Panc1 (cell line): ENCODE measurements at regions of chr11 and their contacts with region 1.

Region 1: DNA sequence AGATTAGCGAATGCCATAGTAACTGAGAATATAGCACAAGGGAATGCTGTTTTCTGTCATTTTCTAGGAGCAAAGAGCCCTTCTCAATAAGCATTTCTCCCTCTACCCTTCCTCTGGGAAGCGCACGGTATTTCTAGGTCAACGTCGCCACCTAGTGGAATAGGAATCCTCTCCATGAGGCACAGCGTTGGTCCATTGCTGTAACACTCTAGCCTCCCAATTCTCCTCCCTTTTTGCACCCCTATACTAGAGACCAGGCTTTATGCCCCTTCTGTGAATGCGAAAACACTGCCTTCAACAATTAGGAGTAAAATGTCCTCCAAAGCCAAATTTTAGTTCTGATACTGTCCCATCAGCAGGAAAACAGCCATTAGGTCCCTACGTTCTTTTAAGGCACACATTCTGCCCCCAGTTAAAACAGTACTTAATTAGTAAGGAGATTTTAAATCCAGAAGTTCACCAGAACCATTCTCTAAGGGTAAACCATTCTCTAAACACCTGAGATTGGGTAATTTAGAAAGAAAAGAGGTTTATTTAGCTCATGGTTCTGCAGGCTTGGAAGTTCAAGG is 12.8 kb upstream of the HYLS1 start:
- DNase-seq: peak; percentile 51
- ATAC-seq: peak; percentile 97
- H3K4me3 ChIP-seq: no peak overlapping the region
- H3K27ac ChIP-seq: no peak overlapping the region
- H3K4me1 ChIP-seq: no peaks in the 10 kb centered on the region
- H3K27me3 ChIP-seq: no peaks in the 10 kb centered on the region
- CTCF ChIP-seq: peak; percentile 86

Region 2: DNA sequence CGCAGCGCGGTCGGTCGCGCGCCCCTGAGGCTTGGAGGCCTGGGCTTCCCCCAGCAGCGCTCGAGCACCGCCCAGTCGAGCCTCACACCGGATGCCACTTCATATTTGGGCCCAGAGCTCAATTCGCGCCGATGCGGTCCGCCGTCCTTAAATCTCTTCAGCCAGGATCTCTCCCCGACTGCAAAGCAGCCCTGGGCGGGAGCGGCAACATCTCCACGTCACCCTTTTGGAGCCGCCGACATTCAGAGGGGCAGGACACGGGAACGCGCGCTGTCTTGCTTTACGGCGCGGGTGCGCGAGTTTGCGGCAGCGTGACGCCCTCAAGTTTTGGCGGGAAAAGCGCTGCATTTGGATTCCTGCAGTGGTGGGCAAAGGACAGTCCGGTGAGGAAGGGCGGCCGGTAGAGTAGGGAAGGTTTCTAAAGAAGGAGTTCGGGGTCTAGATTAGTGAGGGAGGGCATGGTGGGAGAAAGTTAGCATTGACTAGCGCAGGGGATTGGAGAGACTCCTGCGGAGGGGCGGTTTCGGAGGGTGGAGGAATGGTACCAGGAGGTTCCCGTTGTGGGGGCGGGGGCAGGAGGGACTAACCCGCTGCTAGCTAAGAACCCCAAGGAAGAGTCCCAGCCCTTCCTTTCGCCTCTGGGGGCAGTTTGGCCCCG is 248.9 kb before region 1 on chr11:
- CTCF ChIA-PET with region 1: no interaction called
- POLR2A ChIA-PET with region 1: no interaction called
- in situ Hi-C with region 1: no loop called
- intact Hi-C with region 1: loop called (anchors 5 kb)
- DNase-seq: peak; percentile 85
- ATAC-seq: peak; percentile 92
- H3K4me3 ChIP-seq: peak overlapping the region; percentile 67 to 74
- H3K27ac ChIP-seq: peak overlapping the region; percentile 87
- H3K4me1 ChIP-seq: peaks cover 29% of the 10 kb centered on the region
- H3K27me3 ChIP-seq: no peaks in the 10 kb centered on the region
- CTCF ChIP-seq: no peak

Region 3: DNA sequence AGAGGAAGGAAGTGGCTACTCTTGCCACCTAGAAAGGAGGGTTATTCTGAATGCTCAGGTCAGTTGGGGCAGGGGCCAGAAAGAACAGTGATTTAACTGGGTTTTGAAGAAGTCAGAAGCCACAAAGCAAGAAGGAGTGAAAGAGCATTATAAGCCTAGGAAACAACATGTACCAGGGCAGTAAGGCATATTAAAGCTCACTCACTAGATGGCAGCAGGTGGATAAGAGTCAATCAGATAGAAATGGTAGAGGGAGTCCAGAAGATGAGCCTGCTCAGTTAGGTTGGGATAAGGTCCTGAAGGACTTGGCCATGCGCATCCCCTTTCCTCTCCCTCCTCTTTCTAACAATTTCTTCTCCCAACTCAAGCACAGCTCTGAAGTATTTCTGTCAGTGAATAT is 150.5 kb before region 1 on chr11:
- CTCF ChIA-PET with region 1: no interaction called
- POLR2A ChIA-PET with region 1: no interaction called
- in situ Hi-C with region 1: no loop called
- intact Hi-C with region 1: loop called (anchors 1 kb)
- DNase-seq: no peak
- ATAC-seq: peak; percentile 85
- H3K4me3 ChIP-seq: no peak overlapping the region
- H3K27ac ChIP-seq: no peak overlapping the region
- H3K4me1 ChIP-seq: no peaks in the 10 kb centered on the region
- H3K27me3 ChIP-seq: peaks cover 21% of the 10 kb centered on the region
- CTCF ChIP-seq: peak; percentile 67